A549 (cell line): ENCODE measurements at regions of chr16 and their contacts with region 1.

Region 1: DNA sequence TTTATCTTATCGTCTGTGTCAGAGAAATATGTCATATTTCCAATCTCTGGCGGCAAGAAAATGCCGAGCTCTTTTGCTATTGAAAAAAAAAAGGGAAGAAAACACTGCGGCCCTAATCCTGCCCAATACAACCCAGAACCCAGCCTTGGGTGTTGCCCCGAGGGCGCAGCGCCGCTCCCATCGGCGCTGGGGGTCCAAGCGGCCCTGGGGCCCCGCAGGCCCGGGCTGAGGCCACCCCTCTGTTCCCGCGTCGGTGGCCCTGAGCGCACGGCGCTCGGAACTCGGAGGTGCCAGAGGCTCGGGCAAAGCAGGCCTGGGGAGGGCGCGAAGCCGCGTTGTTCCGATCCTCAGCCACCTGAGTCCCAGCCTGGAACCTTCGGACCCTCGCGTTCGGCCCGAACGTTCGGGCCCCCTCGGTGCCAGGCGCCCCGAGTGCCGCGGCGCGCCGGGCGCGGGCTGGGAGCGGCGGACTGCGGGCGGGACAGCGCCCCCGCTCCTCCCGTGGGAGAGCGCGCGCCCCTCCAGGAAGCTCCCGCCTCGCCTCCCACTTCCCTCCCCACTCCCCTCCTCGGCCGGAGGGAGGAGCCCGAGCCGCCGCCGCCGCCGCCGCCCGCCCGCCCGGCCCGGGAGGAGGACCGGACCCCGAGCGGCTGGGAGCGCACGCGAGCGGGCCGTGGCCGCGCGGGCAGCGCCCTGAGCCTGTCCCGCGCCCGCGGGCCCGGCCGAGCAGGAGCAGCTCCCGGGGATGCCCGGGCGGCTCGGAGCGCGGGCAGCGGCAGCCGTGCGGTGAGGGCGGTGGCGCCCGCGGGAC is at the start of gene CPNE2:
- DNase-seq: peak; percentile 48 to 71
- ATAC-seq: peak; percentile 76 to 85
- H3K4me3 ChIP-seq: peak within 1 kb of the TSS; percentile 99
- H3K27ac ChIP-seq: peak within 1 kb of the TSS; percentile 98 to 99
- H3K4me1 ChIP-seq: peaks cover 15% of the 10 kb centered on the region
- CTCF ChIP-seq: no peak
- EP300 ChIP-seq: no peak
- POLR2A ChIP-seq: peak; percentile 75
- RAD21 ChIP-seq: no peak
- polyA plus RNA-seq, gene CPNE2: 36.7 and 44.4 TPM in 2 replicates

Region 2: GRCh38 chr16:56888806-56889205 is 203.4 kb before region 1 on chr16:
- CTCF ChIA-PET with region 1: no interaction called
- POLR2A ChIA-PET with region 1: no interaction called
- DNase-seq: no peak
- ATAC-seq: no peak
- H3K4me3 ChIP-seq: no peak overlapping the region
- H3K27ac ChIP-seq: no peak overlapping the region
- H3K4me1 ChIP-seq: no peaks in the 10 kb centered on the region
- CTCF ChIP-seq: no peak
- EP300 ChIP-seq: no peak
- POLR2A ChIP-seq: no peak
- RAD21 ChIP-seq: no peak

Region 3: DNA sequence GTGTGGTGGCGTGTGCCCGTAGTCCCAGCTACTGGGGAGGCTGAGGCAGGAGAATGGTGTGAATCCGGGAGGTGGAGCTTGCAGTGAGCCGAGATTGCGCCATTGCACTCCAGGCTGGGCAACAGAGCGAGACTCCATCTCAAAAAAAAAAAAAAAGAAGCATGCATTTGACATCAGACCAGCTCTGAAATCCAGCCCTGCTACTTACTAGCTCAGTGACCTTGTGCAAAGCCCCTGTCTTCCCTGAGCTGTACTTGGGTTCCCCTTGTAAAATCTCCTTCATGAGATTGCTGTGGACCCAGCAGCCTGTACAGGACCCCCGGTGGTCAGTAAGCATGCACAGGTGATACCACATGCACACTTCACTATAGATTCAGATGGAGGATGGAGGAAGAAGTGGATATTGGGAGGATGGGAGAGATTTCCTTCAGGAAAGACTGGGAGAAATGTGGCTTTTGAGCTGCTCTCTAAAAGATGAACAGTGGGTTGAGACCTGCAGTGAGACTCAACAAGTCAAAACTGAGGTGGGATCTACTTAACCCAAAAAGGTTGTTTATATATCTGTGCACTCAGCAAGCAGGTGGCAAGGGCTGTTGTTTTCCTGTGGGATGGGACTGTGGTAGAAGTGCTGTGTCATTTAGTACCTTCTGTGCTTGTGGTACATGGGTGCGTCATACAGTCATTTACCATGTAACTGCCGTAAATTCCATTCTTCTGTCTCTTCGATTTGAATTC is 153.6 kb before region 1 on chr16:
- CTCF ChIA-PET with region 1: no interaction called
- POLR2A ChIA-PET with region 1: no interaction called
- DNase-seq: no peak
- ATAC-seq: peak in 1 of 2 experiments; percentile 32; a peak in 3 of 6 replicates
- H3K4me3 ChIP-seq: no peak overlapping the region
- H3K27ac ChIP-seq: no peak overlapping the region
- H3K4me1 ChIP-seq: peaks cover 34% of the 10 kb centered on the region
- CTCF ChIP-seq: no peak
- EP300 ChIP-seq: no peak
- POLR2A ChIP-seq: no peak
- RAD21 ChIP-seq: no peak

Region 4: GRCh38 chr16:57106767-57107166 is 14.6 kb after region 1 on chr16:
- CTCF ChIA-PET with region 1: interaction called, 72 read pairs
- POLR2A ChIA-PET with region 1: interaction called, 3 read pairs
- DNase-seq: no peak
- ATAC-seq: peak; percentile 15 to 24; a peak in 2 of 6 replicates
- H3K4me3 ChIP-seq: no peak overlapping the region
- H3K27ac ChIP-seq: peak overlapping the region in 1 of 2 experiments; percentile 58; a peak in 2 of 6 replicates
- H3K4me1 ChIP-seq: peaks cover 28% of the 10 kb centered on the region
- CTCF ChIP-seq: no peak
- EP300 ChIP-seq: no peak
- POLR2A ChIP-seq: no peak
- RAD21 ChIP-seq: no peak

Region 5: DNA sequence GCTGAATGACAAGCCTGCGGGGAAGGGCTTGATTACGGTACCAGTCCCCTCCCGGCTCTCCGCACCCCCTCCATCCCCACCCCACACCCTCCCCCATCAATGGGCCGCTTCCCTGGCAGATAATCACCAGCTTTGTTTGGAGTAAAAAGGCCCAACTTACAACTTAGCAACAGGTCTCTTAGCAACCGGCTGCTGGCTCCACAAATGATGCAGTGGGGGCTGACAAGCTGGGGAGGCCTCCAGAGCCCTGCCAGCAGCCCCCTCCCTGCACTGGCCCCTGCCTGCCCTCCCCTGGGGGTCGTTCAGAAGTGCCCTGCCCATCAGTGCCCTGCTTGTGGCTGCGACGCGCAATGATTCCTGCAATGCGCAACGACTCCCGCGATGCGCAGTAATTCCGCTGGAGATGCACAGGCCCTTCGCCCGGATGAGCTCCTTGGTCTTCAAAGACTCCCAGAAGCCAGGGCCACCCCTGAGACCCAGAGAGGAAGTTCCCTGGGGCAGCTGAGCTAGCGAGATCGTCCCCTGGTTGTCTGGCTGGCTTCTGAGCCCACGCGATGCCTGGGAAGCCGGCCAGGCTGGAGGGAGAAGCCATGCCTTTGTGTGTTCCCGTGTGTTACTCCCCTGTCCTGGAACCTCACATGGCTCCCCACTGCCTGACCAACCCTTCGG is 23.5 kb after region 1 on chr16:
- CTCF ChIA-PET with region 1: interaction called, 16 read pairs
- POLR2A ChIA-PET with region 1: interaction called, 3 read pairs
- DNase-seq: no peak
- ATAC-seq: 0 out of 6 replicates have a peak, but pooled peaks of 1 of the 2 experiments have one; percentile 9
- H3K4me3 ChIP-seq: no peak overlapping the region
- H3K27ac ChIP-seq: no peak overlapping the region; a peak in 1 of 6 replicates
- H3K4me1 ChIP-seq: peaks cover 7% of the 10 kb centered on the region; the same call in 1 of the 3 replicates
- CTCF ChIP-seq: no peak
- EP300 ChIP-seq: no peak
- POLR2A ChIP-seq: no peak
- RAD21 ChIP-seq: no peak

Region 6: DNA sequence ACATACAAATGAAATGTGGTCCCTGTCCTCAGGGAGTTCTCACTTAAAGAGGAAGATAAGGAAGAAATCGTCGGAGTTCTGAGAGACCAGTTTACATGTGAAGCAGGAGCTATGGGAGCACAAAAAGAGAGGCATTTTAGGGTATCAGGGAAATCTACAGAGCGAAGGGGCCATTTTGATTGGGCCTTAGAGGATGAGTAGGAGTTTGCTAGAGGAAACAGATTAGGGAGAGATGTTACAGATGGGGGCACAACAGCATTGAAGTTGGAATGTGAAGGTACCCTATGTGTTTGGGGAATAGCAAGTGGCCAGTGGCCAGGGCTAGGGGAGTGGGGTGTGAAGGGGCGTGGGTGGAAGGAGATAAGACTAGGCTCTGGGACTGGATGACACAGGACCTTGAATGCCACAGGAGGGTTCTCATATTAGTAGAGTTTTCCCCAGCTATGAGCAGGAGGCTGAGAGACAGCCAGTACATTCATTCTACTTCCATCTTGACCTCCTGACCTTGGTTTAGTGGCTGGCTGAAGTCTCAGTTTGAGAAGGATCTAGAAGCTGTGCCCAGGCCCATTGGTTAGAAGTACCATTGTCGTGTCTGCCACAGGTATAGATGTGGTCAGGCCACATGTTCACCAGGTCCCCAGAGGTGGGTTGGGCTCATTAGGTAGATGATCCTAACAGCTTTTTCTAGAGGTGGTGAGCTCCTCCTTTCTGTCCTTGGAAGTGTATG is 35.0 kb after region 1 on chr16:
- CTCF ChIA-PET with region 1: interaction called, 19 read pairs
- POLR2A ChIA-PET with region 1: no interaction called
- DNase-seq: no peak
- ATAC-seq: no peak
- H3K4me3 ChIP-seq: no peak overlapping the region
- H3K27ac ChIP-seq: no peak overlapping the region
- H3K4me1 ChIP-seq: no peaks in the 10 kb centered on the region
- CTCF ChIP-seq: no peak
- EP300 ChIP-seq: no peak
- POLR2A ChIP-seq: no peak
- RAD21 ChIP-seq: no peak

Region 7: GRCh38 chr16:57141822-57142631 is 49.8 kb after region 1 on chr16:
- CTCF ChIA-PET with region 1: interaction called, 18 read pairs
- POLR2A ChIA-PET with region 1: no interaction called
- DNase-seq: no peak
- ATAC-seq: no peak
- H3K4me3 ChIP-seq: no peak overlapping the region
- H3K27ac ChIP-seq: no peak overlapping the region
- H3K4me1 ChIP-seq: no peaks in the 10 kb centered on the region
- CTCF ChIP-seq: no peak
- EP300 ChIP-seq: no peak
- POLR2A ChIP-seq: no peak
- RAD21 ChIP-seq: no peak

Region 8: GRCh38 chr16:57147381-57148221 is 55.4 kb after region 1 on chr16:
- CTCF ChIA-PET with region 1: interaction called, 18 read pairs
- POLR2A ChIA-PET with region 1: no interaction called
- DNase-seq: no peak
- ATAC-seq: no peak
- H3K4me3 ChIP-seq: no peak overlapping the region
- H3K27ac ChIP-seq: no peak overlapping the region
- H3K4me1 ChIP-seq: no peaks in the 10 kb centered on the region
- CTCF ChIP-seq: no peak
- EP300 ChIP-seq: no peak
- POLR2A ChIP-seq: no peak
- RAD21 ChIP-seq: no peak

Region 9: DNA sequence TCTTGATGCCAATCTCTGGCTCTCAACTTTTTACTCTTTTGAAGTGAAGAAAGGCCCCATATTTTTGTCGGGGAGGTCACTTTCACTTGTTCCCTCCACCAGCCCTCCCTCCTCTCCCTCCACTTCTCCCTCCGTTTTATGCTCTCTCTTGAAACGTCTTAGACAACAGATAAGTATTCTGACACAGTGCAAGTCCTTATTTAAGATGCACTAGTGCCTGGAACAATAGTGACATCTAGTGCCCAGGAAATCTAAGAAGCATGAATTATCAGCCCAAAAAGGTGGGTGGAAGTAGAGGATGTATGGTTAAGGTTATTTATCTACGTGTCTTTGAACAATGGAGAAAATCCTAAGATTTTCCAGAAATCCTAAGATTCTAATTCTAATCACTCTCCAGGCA is 75.8 kb after region 1 on chr16:
- CTCF ChIA-PET with region 1: interaction called, 12 read pairs
- POLR2A ChIA-PET with region 1: no interaction called
- DNase-seq: peak in 1 of 2 experiments; percentile 73
- ATAC-seq: peak; percentile 80 to 84
- H3K4me3 ChIP-seq: no peak overlapping the region
- H3K27ac ChIP-seq: no peak overlapping the region
- H3K4me1 ChIP-seq: no peaks in the 10 kb centered on the region
- CTCF ChIP-seq: peak; percentile 71
- EP300 ChIP-seq: no peak
- POLR2A ChIP-seq: no peak
- RAD21 ChIP-seq: peak; percentile 67 to 79